ENCODE measurements at regions of chr19 and their contacts with region 1.

Region 1: GRCh38 chr19:48713864-48714758 is 5.4 kb downstream of the MAMSTR start:
- DNase-seq: peak; percentile 98 to 99
- H3K4me3 ChIP-seq: peak overlapping the region; percentile 76 to 86 (median 82)
- H3K27ac ChIP-seq: peak overlapping the region; percentile 70; the same call in 1 of the 2 replicates
- H3K4me1 ChIP-seq: peaks cover 0 to 27% (median 7%) of the 10 kb centered on the region in 4 experiments; a peak in 6 of 7 replicates
- H3K27me3 ChIP-seq: no peaks in the 10 kb centered on the region
- CTCF ChIP-seq: no peak
- EP300 ChIP-seq: no peak
- POLR2A ChIP-seq: no peak
- RAD21 ChIP-seq: no peak

Region 2: GRCh38 chr19:48513289-48514122 is 200.6 kb before region 1 on chr19:
- CTCF ChIA-PET with region 1: no interaction called
- POLR2A ChIA-PET with region 1: no interaction called
- DNase-seq: peak in 1 of 2 experiments; percentile 87
- H3K4me3 ChIP-seq: peak overlapping the region; percentile 51 to 81 (median 69)
- H3K27ac ChIP-seq: no peak overlapping the region
- H3K4me1 ChIP-seq: peaks cover 0 to 23% (median 12%) of the 10 kb centered on the region in 4 experiments; a peak in 5 of 7 replicates
- H3K27me3 ChIP-seq: peaks cover 0 to 12% (median 9%) of the 10 kb centered on the region in 4 experiments; a peak in 4 of 7 replicates
- CTCF ChIP-seq: peak in 1 of 3 experiments; percentile 1; a peak in 1 of 4 replicates
- EP300 ChIP-seq: no peak
- POLR2A ChIP-seq: no peak; a peak in 1 of 3 replicates
- RAD21 ChIP-seq: no peak

Region 3: GRCh38 chr19:48624067-48624594 is 90.0 kb before region 1 on chr19:
- CTCF ChIA-PET with region 1: no interaction called
- POLR2A ChIA-PET with region 1: no interaction called
- DNase-seq: peak; percentile 91 to 95
- H3K4me3 ChIP-seq: peak overlapping the region; percentile 53 to 87 (median 80)
- H3K27ac ChIP-seq: peak overlapping the region; percentile 47; the same call in 1 of the 2 replicates
- H3K4me1 ChIP-seq: peaks cover 3 to 13% (median 6%) of the 10 kb centered on the region in 4 experiments; a peak in 6 of 7 replicates
- H3K27me3 ChIP-seq: no peaks in the 10 kb centered on the region
- CTCF ChIP-seq: no peak
- EP300 ChIP-seq: peak in 1 of 2 experiments; percentile 74; a peak in 1 of 3 replicates
- POLR2A ChIP-seq: no peak; a peak in 1 of 3 replicates
- RAD21 ChIP-seq: no peak

Region 4: GRCh38 chr19:48664450-48664849 is 49.7 kb before region 1 on chr19:
- CTCF ChIA-PET with region 1: interaction called, 10 read pairs
- POLR2A ChIA-PET with region 1: interaction called, 3 read pairs
- DNase-seq: no peak
- H3K4me3 ChIP-seq: no peak overlapping the region
- H3K27ac ChIP-seq: no peak overlapping the region
- H3K4me1 ChIP-seq: 0 out of 7 replicates have a peak, but pooled peaks cover 0 to 3% (median 0%) of the 10 kb centered on the region in 4 experiments
- H3K27me3 ChIP-seq: no peaks in the 10 kb centered on the region; a peak in 1 of 7 replicates
- CTCF ChIP-seq: no peak
- EP300 ChIP-seq: no peak
- POLR2A ChIP-seq: no peak
- RAD21 ChIP-seq: no peak

Region 5: GRCh38 chr19:48683349-48683748 is 30.8 kb before region 1 on chr19:
- CTCF ChIA-PET with region 1: interaction called, 53 read pairs
- POLR2A ChIA-PET with region 1: interaction called, 5 read pairs
- DNase-seq: no peak
- H3K4me3 ChIP-seq: no peak overlapping the region
- H3K27ac ChIP-seq: no peak overlapping the region
- H3K4me1 ChIP-seq: no peaks in the 10 kb centered on the region; a peak in 1 of 7 replicates
- H3K27me3 ChIP-seq: no peaks in the 10 kb centered on the region
- CTCF ChIP-seq: no peak
- EP300 ChIP-seq: no peak
- POLR2A ChIP-seq: no peak
- RAD21 ChIP-seq: no peak

Region 6: GRCh38 chr19:48698046-48698445 is 16.1 kb before region 1 on chr19:
- CTCF ChIA-PET with region 1: interaction called, 42 read pairs
- POLR2A ChIA-PET with region 1: interaction called, 59 read pairs
- DNase-seq: no peak
- H3K4me3 ChIP-seq: no peak overlapping the region
- H3K27ac ChIP-seq: no peak overlapping the region
- H3K4me1 ChIP-seq: peaks cover 0 to 5% (median 1%) of the 10 kb centered on the region in 4 experiments; a peak in 4 of 7 replicates
- H3K27me3 ChIP-seq: no peaks in the 10 kb centered on the region
- CTCF ChIP-seq: no peak
- EP300 ChIP-seq: no peak
- POLR2A ChIP-seq: no peak
- RAD21 ChIP-seq: no peak

Region 7: GRCh38 chr19:48724796-48725753 is 11.0 kb after region 1 on chr19:
- CTCF ChIA-PET with region 1: interaction called, 12 read pairs
- POLR2A ChIA-PET with region 1: interaction called, 9 read pairs
- DNase-seq: no peak
- H3K4me3 ChIP-seq: no peak overlapping the region
- H3K27ac ChIP-seq: no peak overlapping the region
- H3K4me1 ChIP-seq: peaks cover 0 to 11% (median under 1%) of the 10 kb centered on the region in 4 experiments; a peak in 4 of 7 replicates
- H3K27me3 ChIP-seq: no peaks in the 10 kb centered on the region
- CTCF ChIP-seq: no peak
- EP300 ChIP-seq: no peak
- POLR2A ChIP-seq: no peak
- RAD21 ChIP-seq: no peak

Region 8: DNA sequence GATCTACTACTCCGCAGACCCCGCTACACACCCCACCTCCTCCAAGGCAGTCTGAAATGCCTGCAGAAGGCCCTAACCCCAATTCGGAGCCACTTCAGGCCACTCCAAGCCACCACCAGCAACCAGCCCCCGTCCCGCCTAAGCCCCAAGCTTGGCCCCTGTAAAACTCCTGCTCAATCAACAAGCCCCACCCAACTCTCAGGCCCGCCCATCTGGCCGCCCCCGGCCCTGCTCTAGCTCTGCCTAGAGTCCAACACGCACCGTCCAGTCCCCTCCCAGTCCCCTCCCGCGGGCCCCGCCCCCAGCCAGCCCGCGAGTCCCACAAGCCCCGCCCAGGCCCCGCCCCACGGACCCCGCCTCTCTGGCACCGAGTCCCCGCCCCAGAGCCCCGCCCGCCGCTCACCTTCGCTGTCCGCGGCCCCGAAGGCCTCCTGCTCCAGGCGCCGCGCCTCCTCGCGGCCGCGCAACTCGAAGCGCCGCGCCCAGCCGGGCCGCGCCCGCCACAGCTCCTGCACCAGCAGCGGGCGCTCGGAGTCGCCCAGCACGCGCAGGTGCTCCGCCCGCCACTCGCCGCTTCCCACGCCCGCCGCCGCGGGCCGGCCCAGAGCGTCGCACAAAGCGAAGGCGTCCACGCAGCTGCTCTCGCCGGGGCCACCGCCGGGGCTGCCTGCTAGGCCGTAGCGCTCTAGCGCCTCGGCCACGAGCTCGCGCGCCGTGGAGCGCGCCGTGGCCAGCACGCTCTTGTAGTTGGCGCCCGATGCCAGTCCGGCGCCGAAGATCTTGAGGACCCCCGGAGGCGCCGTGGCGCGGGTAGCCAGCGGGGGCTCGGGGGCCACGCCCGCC is 24.7 kb after region 1 on chr19:
- CTCF ChIA-PET with region 1: interaction called, 23 read pairs
- POLR2A ChIA-PET with region 1: interaction called, 11 read pairs
- DNase-seq: peak; percentile 89 to 99
- H3K4me3 ChIP-seq: peak overlapping the region; percentile 38 to 75 (median 52)
- H3K27ac ChIP-seq: no peak overlapping the region
- H3K4me1 ChIP-seq: peaks cover 5 to 26% (median 22%) of the 10 kb centered on the region in 4 experiments
- H3K27me3 ChIP-seq: peaks cover 3 to 19% (median 12%) of the 10 kb centered on the region in 4 experiments; a peak in 6 of 7 replicates
- CTCF ChIP-seq: peak; percentile 48 to 86 (median 56)
- EP300 ChIP-seq: no peak
- POLR2A ChIP-seq: no peak
- RAD21 ChIP-seq: peak; percentile 27 to 65

Measured in H1 (cell line).